WTC11 (cell line): ENCODE measurements at regions of chr6 and their contacts with region 1.

Region 1: GRCh38 chr6:133923938-133924593 is 29.0 kb upstream of the TBPL1 start:
- DNase-seq: peak; percentile 65
- ATAC-seq: peak; percentile 93
- H3K4me3 Mint-ChIP-seq: peak overlapping the region; percentile 53
- H3K27ac Mint-ChIP-seq: no peak overlapping the region; the same call in 1 of the 2 replicates
- H3K4me1 Mint-ChIP-seq: peaks cover 11% of the 10 kb centered on the region
- H3K27me3 Mint-ChIP-seq: no peaks in the 10 kb centered on the region
- CTCF ChIP-seq: peak; percentile 62

Region 2: DNA sequence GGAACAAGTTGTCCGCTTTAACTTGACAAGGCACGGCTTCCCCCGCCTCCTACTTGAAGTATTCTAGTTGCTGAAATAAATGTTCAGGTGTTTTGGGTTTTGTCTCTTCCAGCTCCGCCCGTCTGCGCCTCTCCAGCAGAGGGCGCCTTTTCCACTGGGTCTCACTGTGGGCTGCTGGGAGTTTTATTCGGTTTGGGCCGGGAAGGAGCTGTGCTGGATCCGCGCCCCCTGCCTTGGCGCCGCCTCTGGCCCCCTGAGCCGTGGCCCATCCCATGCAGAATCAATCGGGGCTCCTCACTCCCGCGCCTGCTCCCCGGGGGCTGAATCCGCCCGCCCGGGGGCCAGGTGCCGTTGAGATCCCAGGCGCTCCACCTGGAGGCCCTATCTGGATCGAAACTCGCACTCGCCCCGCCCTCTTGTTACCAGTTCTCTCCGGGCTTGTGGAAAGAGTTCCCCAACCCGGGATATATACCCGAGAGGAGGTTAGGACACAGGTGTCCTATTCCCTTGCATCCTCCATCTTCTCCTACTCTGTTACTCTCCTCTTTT is 86.2 kb before region 1 on chr6:
- CTCF ChIA-PET with region 1: interaction called, 23 read pairs
- POLR2A ChIA-PET with region 1: interaction called, 3 read pairs
- DNase-seq: peak; percentile 90
- ATAC-seq: peak; percentile 96
- H3K4me3 Mint-ChIP-seq: peak overlapping the region; percentile 66
- H3K27ac Mint-ChIP-seq: peak overlapping the region; percentile 91
- H3K4me1 Mint-ChIP-seq: peaks cover 26% of the 10 kb centered on the region
- H3K27me3 Mint-ChIP-seq: no peaks in the 10 kb centered on the region
- CTCF ChIP-seq: peak; percentile 90

Region 3: DNA sequence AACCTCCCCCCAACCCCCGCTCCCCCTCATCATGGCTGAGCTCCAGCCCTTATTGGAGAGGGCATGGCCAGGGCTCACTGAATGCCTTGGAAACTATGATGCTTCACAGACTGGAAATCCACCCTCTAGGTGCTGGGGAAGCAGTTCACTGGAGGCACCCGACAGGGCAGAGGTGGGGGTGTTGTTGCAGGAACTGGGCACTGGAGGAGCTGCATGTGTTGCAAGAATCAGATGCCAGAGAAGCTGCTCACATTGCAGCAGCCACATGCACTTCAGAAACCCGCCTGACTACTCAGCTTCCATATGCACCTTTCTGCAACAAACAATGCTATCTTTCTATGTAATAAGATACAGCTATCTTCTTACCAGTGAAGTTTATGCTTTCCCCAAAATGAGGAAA is 21.1 kb after region 1 on chr6:
- CTCF ChIA-PET with region 1: interaction called, 17 read pairs
- POLR2A ChIA-PET with region 1: no interaction called
- DNase-seq: peak; percentile 18
- ATAC-seq: peak; percentile 77
- H3K4me3 Mint-ChIP-seq: no peak overlapping the region
- H3K27ac Mint-ChIP-seq: no peak overlapping the region
- H3K4me1 Mint-ChIP-seq: 0 out of 2 replicates have a peak, but pooled peaks cover 3% of the 10 kb centered on the region
- H3K27me3 Mint-ChIP-seq: peaks cover 3% of the 10 kb centered on the region
- CTCF ChIP-seq: no peak

Region 4: DNA sequence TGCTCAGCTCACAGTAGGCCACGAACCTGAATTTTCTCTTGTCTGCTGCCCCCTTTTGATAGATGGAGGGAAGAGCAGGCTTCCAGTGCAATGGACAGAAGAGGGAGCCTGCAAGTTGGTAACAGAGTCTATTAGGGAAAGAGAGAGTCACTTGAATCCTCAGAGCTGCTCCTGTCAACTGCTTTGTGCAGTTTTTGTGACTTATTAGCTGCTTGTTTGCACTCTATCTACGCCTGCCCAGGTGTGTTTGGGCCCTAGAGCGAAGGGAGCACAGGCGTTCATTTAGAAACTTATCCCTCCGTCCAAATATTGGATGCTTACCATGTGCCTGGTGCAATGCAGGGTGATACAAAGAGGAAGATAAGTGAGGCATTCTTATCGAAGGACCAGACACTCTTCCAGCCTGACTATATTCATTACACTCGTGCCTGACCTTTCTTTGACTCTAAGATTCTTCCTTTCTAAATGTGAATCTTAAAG is 139.9 kb after region 1 on chr6:
- CTCF ChIA-PET with region 1: interaction called, 16 read pairs
- POLR2A ChIA-PET with region 1: no interaction called
- DNase-seq: peak; percentile 36
- ATAC-seq: peak; percentile 51
- H3K4me3 Mint-ChIP-seq: no peak overlapping the region
- H3K27ac Mint-ChIP-seq: peak overlapping the region; percentile 57; the same call in 1 of the 2 replicates
- H3K4me1 Mint-ChIP-seq: peaks cover 37% of the 10 kb centered on the region
- H3K27me3 Mint-ChIP-seq: no peaks in the 10 kb centered on the region
- CTCF ChIP-seq: peak; percentile 19; the same call in 1 of the 2 replicates

Region 5: DNA sequence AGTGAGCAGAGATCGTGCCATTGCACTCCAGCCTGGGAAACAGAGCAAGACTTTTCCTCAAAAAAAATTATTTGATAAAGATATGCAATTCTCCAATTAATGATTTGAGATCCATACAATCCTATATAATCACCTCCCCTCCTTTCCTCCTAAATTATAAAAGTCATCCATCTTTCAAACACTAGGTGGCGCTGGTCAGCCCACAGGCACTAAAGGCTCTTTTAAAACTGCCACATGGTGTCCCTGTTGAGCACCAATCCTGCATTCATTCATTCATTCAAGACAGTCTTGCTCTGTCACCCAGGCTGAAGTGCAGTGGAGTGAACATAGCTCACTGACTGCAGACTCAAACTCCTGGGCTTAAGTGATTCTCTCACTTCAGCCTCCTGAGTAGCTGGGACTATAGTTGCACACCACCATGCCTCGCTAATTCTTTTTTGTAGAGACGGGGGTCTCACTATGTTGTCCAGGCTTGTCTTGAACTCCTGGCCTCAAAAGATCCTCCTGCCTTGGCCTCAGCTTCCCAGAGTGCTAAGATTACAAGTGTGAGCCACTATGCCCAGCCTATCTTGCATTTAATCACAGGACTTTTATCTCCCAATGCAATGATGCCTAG is 187.1 kb after region 1 on chr6:
- CTCF ChIA-PET with region 1: interaction called, 10 read pairs
- POLR2A ChIA-PET with region 1: no interaction called
- DNase-seq: peak; percentile 34
- ATAC-seq: peak; percentile 73
- H3K4me3 Mint-ChIP-seq: no peak overlapping the region
- H3K27ac Mint-ChIP-seq: no peak overlapping the region
- H3K4me1 Mint-ChIP-seq: no peaks in the 10 kb centered on the region
- H3K27me3 Mint-ChIP-seq: peaks cover 9% of the 10 kb centered on the region; the same call in 1 of the 2 replicates
- CTCF ChIP-seq: peak; percentile 89